Adrenal gland (tissue), 19 donors: ENCODE measurements at regions of chr9 and their contacts with region 1.

Region 1: GRCh38 chr9:129783516-129784361 is 19.2 kb upstream of the TOR1B start:
- DNase-seq: peak; percentile 71 to 89 (median 80)
- H3K4me3 ChIP-seq: no peak overlapping the region
- H3K27ac ChIP-seq: no peak overlapping the region
- H3K4me1 ChIP-seq: no peaks in the 10 kb centered on the region
- H3K27me3 ChIP-seq: peaks cover 7% of the 10 kb centered on the region
- CTCF ChIP-seq: peak; percentile 89 to 97 (median 94)
- POLR2A ChIP-seq: no peak

Region 2: DNA sequence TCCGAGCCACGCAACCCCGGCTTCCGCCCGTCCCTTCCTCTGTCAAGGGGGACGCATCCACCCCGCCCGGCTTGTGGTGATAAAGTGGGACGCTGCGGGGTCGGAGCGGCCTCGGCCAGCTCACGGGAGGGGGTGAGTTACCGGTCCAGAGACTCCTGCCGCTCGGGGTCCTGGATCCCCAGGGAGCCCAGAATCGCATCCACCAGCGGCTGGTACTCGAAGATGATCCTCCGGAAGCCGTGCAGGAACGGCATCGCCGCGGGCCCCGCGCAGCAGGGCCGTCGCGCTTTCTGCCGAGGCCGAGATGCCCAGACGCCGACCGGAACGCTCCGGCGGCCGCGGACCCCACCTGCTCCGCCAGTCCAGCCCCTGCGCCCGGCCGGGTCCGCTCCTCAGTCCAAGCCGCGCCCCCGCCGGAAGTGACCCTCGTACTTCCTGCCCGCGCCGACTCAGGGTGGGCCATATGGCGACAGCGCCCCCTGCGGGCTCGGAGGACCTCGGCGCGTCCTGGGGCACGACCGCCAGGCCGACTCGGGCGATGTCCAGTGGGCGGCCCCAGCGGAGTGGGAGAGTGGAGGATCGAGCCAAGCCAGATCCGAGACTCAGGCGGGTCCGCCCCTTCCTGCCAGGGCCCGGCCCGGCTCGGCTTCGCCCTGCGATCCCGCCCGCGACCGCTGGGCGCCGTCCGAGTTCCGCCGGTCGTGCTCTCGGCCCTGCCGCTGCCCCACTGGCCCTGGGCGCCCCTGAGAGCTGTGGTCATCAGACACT is 141.8 kb before region 1 on chr9 and contains the start of gene ASB6:
- intact Hi-C with region 1: loop called (anchors 5 kb)
- DNase-seq: peak; percentile 97 to 98 (median 98)
- H3K4me3 ChIP-seq: peak within 1 kb of the TSS; percentile 61 to 99 (median 77)
- H3K27ac ChIP-seq: peak within 1 kb of the TSS; percentile 62 to 85 (median 73)
- H3K4me1 ChIP-seq: peaks cover 18 to 25% of the 10 kb centered on the region in 2 donors
- H3K27me3 ChIP-seq: no peaks in the 10 kb centered on the region
- CTCF ChIP-seq: peak; percentile 98 to 100 (median 99)
- POLR2A ChIP-seq: peak; percentile 41 to 68
- total RNA-seq, gene ASB6: 10.0 to 31.8 (median 26.7) TPM

Region 3: GRCh38 chr9:129648092-129648763 is 135.5 kb before region 1 on chr9:
- intact Hi-C with region 1: loop called (anchors 5 kb)
- DNase-seq: peak in 1 of 7 donors; percentile 15
- H3K4me3 ChIP-seq: no peak overlapping the region
- H3K27ac ChIP-seq: no peak overlapping the region
- H3K4me1 ChIP-seq: no peaks in the 10 kb centered on the region
- H3K27me3 ChIP-seq: no peaks in the 10 kb centered on the region
- CTCF ChIP-seq: no peak
- POLR2A ChIP-seq: no peak

Region 4: GRCh38 chr9:129737479-129738274 is 46.1 kb before region 1 on chr9:
- intact Hi-C with region 1: loop called (anchors 2 kb)
- DNase-seq: peak; percentile 75 to 92 (median 86)
- H3K4me3 ChIP-seq: peak overlapping the region in 3 of 4 donors; percentile 18 to 65 (median 33)
- H3K27ac ChIP-seq: peak overlapping the region in 2 of 5 donors; percentile 41 to 67
- H3K4me1 ChIP-seq: peaks cover 0 to 3% of the 10 kb centered on the region in 2 donors
- H3K27me3 ChIP-seq: no peaks in the 10 kb centered on the region
- CTCF ChIP-seq: peak; percentile 94 to 100 (median 98)
- POLR2A ChIP-seq: peak in 1 of 2 donors; percentile 27